ENCODE measurements at regions of chr1 and their contacts with region 1.

Region 1: GRCh38 chr1:197761621-197762020 is 13.7 kb downstream of the DENND1B start:
- DNase-seq: no peak
- ATAC-seq: peak; percentile 20
- H3K4me3 Mint-ChIP-seq: no peak overlapping the region
- H3K27ac Mint-ChIP-seq: peak overlapping the region; percentile 43
- H3K4me1 Mint-ChIP-seq: peaks cover 29% of the 10 kb centered on the region
- H3K27me3 Mint-ChIP-seq: no peaks in the 10 kb centered on the region

Region 2: GRCh38 chr1:197683895-197684553 is 77.6 kb before region 1 on chr1:
- CTCF ChIA-PET with region 1: no interaction called
- DNase-seq: no peak
- ATAC-seq: no peak
- H3K4me3 Mint-ChIP-seq: no peak overlapping the region
- H3K27ac Mint-ChIP-seq: no peak overlapping the region
- H3K4me1 Mint-ChIP-seq: peaks cover 9% of the 10 kb centered on the region
- H3K27me3 Mint-ChIP-seq: no peaks in the 10 kb centered on the region

Region 3: GRCh38 chr1:197736644-197737043 is 25.0 kb before region 1 on chr1:
- CTCF ChIA-PET with region 1: no interaction called
- DNase-seq: no peak
- ATAC-seq: no peak
- H3K4me3 Mint-ChIP-seq: no peak overlapping the region
- H3K27ac Mint-ChIP-seq: no peak overlapping the region
- H3K4me1 Mint-ChIP-seq: peaks cover 22% of the 10 kb centered on the region
- H3K27me3 Mint-ChIP-seq: no peaks in the 10 kb centered on the region

Region 4: GRCh38 chr1:197775282-197776262 is 14.0 kb after region 1 on chr1 and contains the start of gene DENND1B:
- CTCF ChIA-PET with region 1: interaction called, 12 read pairs
- DNase-seq: peak; percentile 91
- ATAC-seq: peak; percentile 58
- H3K4me3 Mint-ChIP-seq: peak within 1 kb of the TSS; percentile 90
- H3K27ac Mint-ChIP-seq: peak within 1 kb of the TSS; percentile 99
- H3K4me1 Mint-ChIP-seq: peaks cover 64% of the 10 kb centered on the region
- H3K27me3 Mint-ChIP-seq: no peaks in the 10 kb centered on the region
- total RNA-seq, gene DENND1B: 29.5 to 30.3 TPM

Region 5: GRCh38 chr1:197944485-197944884 is 182.9 kb after region 1 on chr1:
- CTCF ChIA-PET with region 1: no interaction called
- DNase-seq: no peak
- ATAC-seq: no peak
- H3K4me3 Mint-ChIP-seq: no peak overlapping the region
- H3K27ac Mint-ChIP-seq: no peak overlapping the region
- H3K4me1 Mint-ChIP-seq: peaks cover 17% of the 10 kb centered on the region
- H3K27me3 Mint-ChIP-seq: no peaks in the 10 kb centered on the region

Region 6: DNA sequence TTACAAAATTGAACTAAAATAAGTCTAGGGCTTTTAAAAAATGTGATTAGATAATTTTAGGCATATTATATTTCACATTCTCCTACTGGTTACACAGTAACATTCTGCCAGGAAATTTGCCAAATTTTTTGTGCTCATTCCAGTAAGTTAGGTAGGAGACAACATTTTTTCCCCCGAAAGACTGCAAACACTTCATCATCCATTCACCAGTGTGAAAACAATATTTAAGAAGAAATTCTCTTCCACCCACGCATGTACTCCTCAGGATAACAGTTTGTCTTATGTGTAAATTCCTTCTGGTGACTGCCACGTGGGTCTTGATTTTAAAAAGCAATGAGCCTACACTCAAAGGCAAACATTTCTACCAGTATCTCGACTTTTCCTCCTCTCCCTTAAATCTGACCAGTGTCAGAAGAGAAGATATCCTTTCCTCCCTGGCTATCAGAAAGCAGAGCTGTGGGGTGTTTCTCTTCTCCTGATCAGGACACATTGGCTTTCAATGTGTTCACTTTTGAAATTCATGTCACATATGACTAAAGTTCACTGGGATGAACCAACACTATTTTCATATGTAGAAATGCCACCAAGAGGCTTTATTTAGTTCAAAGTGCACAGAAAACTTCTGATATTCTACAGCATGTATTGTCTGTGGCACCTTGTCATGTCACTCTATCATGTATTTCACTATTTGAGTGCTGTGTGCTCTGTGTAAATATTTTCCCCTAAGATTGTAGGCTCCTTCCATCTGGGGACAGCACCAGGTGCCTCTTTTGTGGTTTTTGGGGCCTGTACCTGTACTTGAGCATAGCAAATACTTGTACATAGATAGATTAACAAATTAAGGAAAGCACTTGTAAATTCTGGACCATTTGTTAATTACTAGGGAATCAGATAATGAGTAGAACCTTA is 194.1 kb after region 1 on chr1:
- CTCF ChIA-PET with region 1: no interaction called
- DNase-seq: no peak
- ATAC-seq: no peak
- H3K4me3 Mint-ChIP-seq: no peak overlapping the region
- H3K27ac Mint-ChIP-seq: no peak overlapping the region
- H3K4me1 Mint-ChIP-seq: peaks cover 9% of the 10 kb centered on the region
- H3K27me3 Mint-ChIP-seq: no peaks in the 10 kb centered on the region

Measured in activated CD8-positive, alpha-beta memory T cell treated with anti-CD3 and anti-CD28 coated beads, Interleukin-2, amount 10 ng/mL, durations not matched to agents 7 days and 5 days (primary cell).